ENCODE measurements at regions of chr1 and their contacts with region 1.

Region 1: GRCh38 chr1:88973520-88974137 is 18.8 kb downstream of the KYAT3 start:
- DNase-seq: no peak
- ATAC-seq: peak; percentile 68
- H3K4me3 Mint-ChIP-seq: no peak overlapping the region
- H3K27ac Mint-ChIP-seq: peak overlapping the region; percentile 4
- H3K4me1 Mint-ChIP-seq: peaks cover 39% of the 10 kb centered on the region
- H3K27me3 Mint-ChIP-seq: no peaks in the 10 kb centered on the region

Region 2: DNA sequence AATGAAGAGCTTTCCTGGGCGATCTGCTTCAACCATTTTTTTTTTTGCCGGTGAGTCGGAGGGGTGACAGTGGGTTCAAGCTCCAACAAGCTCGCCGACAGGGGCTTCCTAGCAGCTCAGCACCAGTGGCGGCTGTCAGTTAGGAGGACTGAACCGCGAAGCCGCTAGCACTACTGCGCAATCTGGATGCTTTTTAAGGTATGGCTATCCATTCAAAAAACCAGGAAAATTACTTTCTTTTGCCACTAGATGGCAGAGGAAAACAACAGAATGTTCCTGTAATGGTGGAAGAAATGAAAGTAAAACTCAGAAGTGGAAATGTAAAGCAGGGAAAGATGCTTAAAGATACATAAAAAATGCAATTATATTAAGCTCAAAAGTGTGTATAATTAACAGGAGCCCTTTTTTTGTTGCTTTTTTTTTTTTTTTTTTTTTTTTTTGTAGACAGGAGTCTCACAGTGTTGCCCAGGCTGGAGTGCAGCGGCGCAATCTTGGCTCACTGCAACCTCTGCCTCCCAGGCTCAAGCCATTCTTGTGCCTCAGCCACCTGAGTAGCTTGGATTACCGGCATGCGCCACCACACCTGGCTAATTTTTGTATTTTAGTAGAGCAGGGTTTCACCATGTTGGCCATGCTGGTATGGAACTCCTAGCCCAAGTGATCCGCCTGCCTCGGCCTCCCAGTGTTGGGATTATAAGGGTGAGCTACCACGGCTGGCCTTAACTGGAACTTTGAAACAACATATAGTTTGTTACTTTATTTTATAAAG is 10.3 kb after region 1 on chr1:
- CTCF ChIA-PET with region 1: interaction called, 22 read pairs
- DNase-seq: peak; percentile 55
- ATAC-seq: peak; percentile 62
- H3K4me3 Mint-ChIP-seq: peak overlapping the region; percentile 64
- H3K27ac Mint-ChIP-seq: peak overlapping the region; percentile 86
- H3K4me1 Mint-ChIP-seq: peaks cover 79% of the 10 kb centered on the region
- H3K27me3 Mint-ChIP-seq: no peaks in the 10 kb centered on the region

Region 3: DNA sequence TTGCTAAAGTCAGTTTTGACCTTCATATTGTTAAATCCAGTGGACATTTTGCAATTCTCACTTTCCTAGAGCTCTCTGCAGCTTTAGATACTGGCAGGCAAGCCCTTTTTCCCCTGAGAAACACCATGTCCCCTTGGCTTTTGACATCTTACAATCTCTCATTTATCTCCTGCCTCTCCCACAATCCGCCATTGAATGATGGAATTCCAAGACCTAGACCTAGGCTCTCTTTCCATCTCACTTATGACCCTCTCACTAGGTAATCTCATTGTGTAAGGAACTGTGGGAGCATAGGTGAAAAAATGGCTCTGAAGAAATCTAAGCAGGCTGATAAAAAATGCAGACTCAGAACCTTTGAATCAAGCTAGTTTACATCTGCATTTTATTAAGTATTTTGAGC is 16.8 kb after region 1 on chr1:
- CTCF ChIA-PET with region 1: interaction called, 15 read pairs
- DNase-seq: no peak
- ATAC-seq: no peak
- H3K4me3 Mint-ChIP-seq: peak overlapping the region; percentile 12
- H3K27ac Mint-ChIP-seq: peak overlapping the region; percentile 61
- H3K4me1 Mint-ChIP-seq: peaks cover 46% of the 10 kb centered on the region
- H3K27me3 Mint-ChIP-seq: no peaks in the 10 kb centered on the region

Region 4: GRCh38 chr1:89149229-89149628 is 175.6 kb after region 1 on chr1:
- CTCF ChIA-PET with region 1: no interaction called
- DNase-seq: no peak
- ATAC-seq: no peak
- H3K4me3 Mint-ChIP-seq: no peak overlapping the region
- H3K27ac Mint-ChIP-seq: no peak overlapping the region
- H3K4me1 Mint-ChIP-seq: peaks cover 6% of the 10 kb centered on the region
- H3K27me3 Mint-ChIP-seq: no peaks in the 10 kb centered on the region